Mammary epithelial cell (primary cell): ENCODE measurements at regions of chr17 and their contacts with region 1.

Region 1: GRCh38 chr17:20992987-20993862 is 49.6 kb downstream of the USP22 start:
- DNase-seq: peak; percentile 47
- H3K4me3 ChIP-seq: no peak overlapping the region
- H3K27ac ChIP-seq: no peak overlapping the region
- H3K4me1 ChIP-seq: peaks cover 8% of the 10 kb centered on the region
- H3K27me3 ChIP-seq: no peaks in the 10 kb centered on the region
- CTCF ChIP-seq: peak; percentile 98

Region 2: DNA sequence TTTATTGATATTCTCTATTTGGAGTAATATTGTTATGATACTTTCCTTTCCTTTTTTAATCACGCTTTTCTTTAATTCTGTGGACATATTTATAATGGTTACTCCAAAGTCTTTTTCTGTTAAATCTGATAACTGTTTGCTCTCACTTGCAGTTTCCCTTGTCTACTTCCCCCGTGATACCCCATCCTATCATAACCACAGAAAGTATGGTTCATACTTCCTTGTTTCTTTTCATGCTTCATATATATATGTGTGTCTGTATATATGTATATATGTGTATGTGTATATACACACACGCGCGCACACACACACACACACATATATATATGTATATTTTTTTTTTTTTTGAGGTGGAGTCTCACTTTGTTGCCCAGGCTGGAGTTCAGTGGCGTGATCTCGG is 960.6 kb before region 1 on chr17:
- CTCF ChIA-PET with region 1: interaction called, 10 read pairs
- dilution Hi-C with region 1: no loop called
- in situ Hi-C with region 1: no loop called
- intact Hi-C with region 1: no loop called
- DNase-seq: no peak
- H3K4me3 ChIP-seq: no peak overlapping the region
- H3K27ac ChIP-seq: no peak overlapping the region
- H3K4me1 ChIP-seq: no peaks in the 10 kb centered on the region
- H3K27me3 ChIP-seq: peaks cover 4% of the 10 kb centered on the region
- CTCF ChIP-seq: no peak

Region 3: DNA sequence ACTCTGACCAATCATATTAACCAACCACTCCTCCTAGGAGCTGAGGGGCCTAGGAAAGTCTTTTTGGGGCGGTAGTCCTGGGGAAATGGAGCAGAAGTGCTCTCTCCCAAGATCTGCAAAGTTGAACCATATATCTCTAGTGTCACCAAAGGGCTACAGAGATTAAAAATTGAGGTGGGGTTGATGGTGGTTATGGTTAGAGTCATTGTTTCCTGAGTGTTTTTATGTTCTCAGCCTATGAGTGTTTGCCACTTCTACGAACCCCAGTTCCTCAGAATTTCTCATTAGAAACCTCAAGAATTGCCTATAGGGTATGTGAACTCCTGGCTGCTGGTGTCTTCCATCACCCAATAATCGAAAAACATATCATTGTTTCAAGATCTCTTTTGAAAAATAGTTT is 195.9 kb before region 1 on chr17:
- CTCF ChIA-PET with region 1: no interaction called
- dilution Hi-C with region 1: no loop called
- in situ Hi-C with region 1: no loop called
- intact Hi-C with region 1: loop called (anchors 1 kb)
- DNase-seq: no peak
- H3K4me3 ChIP-seq: no peak overlapping the region
- H3K27ac ChIP-seq: no peak overlapping the region
- H3K4me1 ChIP-seq: no peaks in the 10 kb centered on the region
- H3K27me3 ChIP-seq: no peaks in the 10 kb centered on the region
- CTCF ChIP-seq: no peak

Region 4: GRCh38 chr17:20896153-20896649 is 97.0 kb before region 1 on chr17:
- CTCF ChIA-PET with region 1: no interaction called
- dilution Hi-C with region 1: no loop called
- in situ Hi-C with region 1: no loop called
- intact Hi-C with region 1: loop called (anchors 1 kb)
- DNase-seq: peak; percentile 66
- H3K4me3 ChIP-seq: no peak overlapping the region
- H3K27ac ChIP-seq: no peak overlapping the region
- H3K4me1 ChIP-seq: no peaks in the 10 kb centered on the region
- H3K27me3 ChIP-seq: no peaks in the 10 kb centered on the region
- CTCF ChIP-seq: peak; percentile 4 to 27

Region 5: DNA sequence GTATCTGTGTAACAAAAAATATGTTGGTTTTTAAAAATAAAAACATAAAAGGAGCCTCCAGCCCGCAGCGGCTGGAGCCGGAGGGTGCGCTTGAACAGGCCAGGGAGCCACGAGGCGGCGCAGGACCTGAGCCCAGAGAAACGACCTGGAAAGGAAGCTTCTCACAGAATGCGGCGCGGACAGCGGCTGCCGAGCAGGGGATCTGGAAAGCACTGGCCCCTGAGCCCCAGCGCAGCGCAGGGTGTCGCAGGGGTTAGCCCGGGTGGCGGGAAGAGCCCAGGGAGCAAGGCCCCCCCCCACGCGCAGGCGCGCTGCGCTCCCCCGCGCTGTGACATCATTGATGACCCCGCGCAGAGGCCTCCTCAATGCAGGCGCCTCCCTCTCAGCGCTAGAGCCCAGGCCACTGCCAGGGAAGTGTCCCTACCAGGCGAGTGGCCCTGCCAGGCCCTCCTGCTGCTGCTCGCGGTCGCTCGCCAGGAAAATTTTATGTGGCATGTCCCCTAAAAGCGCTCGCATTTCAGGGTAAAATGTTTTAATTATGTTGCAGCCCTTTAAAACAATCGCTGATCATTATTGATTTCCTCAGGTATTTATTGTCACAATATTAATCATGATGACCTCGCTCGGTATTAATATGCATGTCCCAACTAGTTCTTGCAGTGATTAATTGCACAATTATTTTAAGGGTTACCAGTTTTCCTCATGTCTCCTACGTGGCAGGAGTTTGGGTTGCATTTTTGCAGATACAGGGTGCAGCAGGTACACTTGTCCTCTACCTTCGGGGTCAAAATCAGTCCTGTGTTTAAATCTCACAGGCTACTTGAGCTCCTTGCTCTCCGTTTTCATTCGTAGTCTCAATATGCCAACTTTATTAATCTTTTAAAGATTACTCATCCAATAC is 84.6 kb before region 1 on chr17:
- CTCF ChIA-PET with region 1: no interaction called
- dilution Hi-C with region 1: no loop called
- in situ Hi-C with region 1: no loop called
- intact Hi-C with region 1: loop called (anchors 1 kb)
- DNase-seq: peak; percentile 70
- H3K4me3 ChIP-seq: peak overlapping the region; percentile 58 to 72 (median 64)
- H3K27ac ChIP-seq: peak overlapping the region; percentile 82
- H3K4me1 ChIP-seq: peaks cover 16% of the 10 kb centered on the region
- H3K27me3 ChIP-seq: no peaks in the 10 kb centered on the region
- CTCF ChIP-seq: peak; percentile 38 to 77

Region 6: GRCh38 chr17:20944014-20944865 is 49.0 kb before region 1 on chr17:
- CTCF ChIA-PET with region 1: interaction called, 9 read pairs
- dilution Hi-C with region 1: no loop called
- in situ Hi-C with region 1: no loop called
- intact Hi-C with region 1: loop called (anchors 1 kb)
- DNase-seq: peak; percentile 57
- H3K4me3 ChIP-seq: no peak overlapping the region
- H3K27ac ChIP-seq: no peak overlapping the region
- H3K4me1 ChIP-seq: no peaks in the 10 kb centered on the region
- H3K27me3 ChIP-seq: no peaks in the 10 kb centered on the region
- CTCF ChIP-seq: peak; percentile 60 to 91

Region 7: GRCh38 chr17:20955427-20956323 is 37.5 kb before region 1 on chr17:
- CTCF ChIA-PET with region 1: interaction called, 3 read pairs
- dilution Hi-C with region 1: loop called (anchors 5 kb)
- in situ Hi-C with region 1: no loop called
- intact Hi-C with region 1: no loop called
- DNase-seq: peak; percentile 77
- H3K4me3 ChIP-seq: no peak overlapping the region
- H3K27ac ChIP-seq: no peak overlapping the region
- H3K4me1 ChIP-seq: peaks cover 7% of the 10 kb centered on the region
- H3K27me3 ChIP-seq: no peaks in the 10 kb centered on the region
- CTCF ChIP-seq: no peak